Caco-2 (cell line): ENCODE measurements at regions of chr10 and their contacts with region 1.

Region 1: GRCh38 chr10:37754538-37755323 is 102.7 kb downstream of the ZNF248 start:
- DNase-seq: peak; percentile 58 to 63
- H3K4me3 ChIP-seq: no peak overlapping the region
- H3K4me3 Mint-ChIP-seq: no peak overlapping the region
- H3K27ac Mint-ChIP-seq: no peak overlapping the region
- H3K4me1 ChIP-seq: peaks cover 8% of the 10 kb centered on the region; the same call in 1 of the 2 replicates
- H3K4me1 Mint-ChIP-seq: no peaks in the 10 kb centered on the region
- H3K27me3 ChIP-seq: no peaks in the 10 kb centered on the region
- H3K27me3 Mint-ChIP-seq: no peaks in the 10 kb centered on the region
- CTCF ChIP-seq: peak; percentile 58 to 83

Region 2: GRCh38 chr10:36888929-36889573 is 865.7 kb before region 1 on chr10:
- CTCF ChIA-PET with region 1: interaction called, 4 read pairs
- POLR2A ChIA-PET with region 1: no interaction called
- intact Hi-C with region 1: loop called (anchors 1 kb)
- DNase-seq: peak; percentile 84 to 89
- H3K4me3 ChIP-seq: no peak overlapping the region
- H3K4me3 Mint-ChIP-seq: no peak overlapping the region
- H3K27ac Mint-ChIP-seq: no peak overlapping the region
- H3K4me1 ChIP-seq: peaks cover 5% of the 10 kb centered on the region; the same call in 1 of the 2 replicates
- H3K4me1 Mint-ChIP-seq: peaks cover 7% of the 10 kb centered on the region
- H3K27me3 ChIP-seq: no peaks in the 10 kb centered on the region
- H3K27me3 Mint-ChIP-seq: no peaks in the 10 kb centered on the region
- CTCF ChIP-seq: peak; percentile 96

Region 3: GRCh38 chr10:36899651-36900050 is 855.1 kb before region 1 on chr10:
- CTCF ChIA-PET with region 1: no interaction called
- POLR2A ChIA-PET with region 1: no interaction called
- intact Hi-C with region 1: loop called (anchors 5 kb)
- DNase-seq: no peak
- H3K4me3 ChIP-seq: no peak overlapping the region
- H3K4me3 Mint-ChIP-seq: no peak overlapping the region
- H3K27ac Mint-ChIP-seq: no peak overlapping the region
- H3K4me1 ChIP-seq: no peaks in the 10 kb centered on the region
- H3K4me1 Mint-ChIP-seq: no peaks in the 10 kb centered on the region
- H3K27me3 ChIP-seq: no peaks in the 10 kb centered on the region
- H3K27me3 Mint-ChIP-seq: no peaks in the 10 kb centered on the region
- CTCF ChIP-seq: no peak

Region 4: GRCh38 chr10:37146443-37146842 is 608.3 kb before region 1 on chr10:
- CTCF ChIA-PET with region 1: no interaction called
- POLR2A ChIA-PET with region 1: no interaction called
- intact Hi-C with region 1: loop called (anchors 1 kb)
- DNase-seq: peak; percentile 70 to 71
- H3K4me3 ChIP-seq: no peak overlapping the region
- H3K4me3 Mint-ChIP-seq: no peak overlapping the region
- H3K27ac Mint-ChIP-seq: no peak overlapping the region
- H3K4me1 ChIP-seq: peaks cover 10% of the 10 kb centered on the region
- H3K4me1 Mint-ChIP-seq: peaks cover 14% of the 10 kb centered on the region
- H3K27me3 ChIP-seq: no peaks in the 10 kb centered on the region
- H3K27me3 Mint-ChIP-seq: no peaks in the 10 kb centered on the region
- CTCF ChIP-seq: peak; percentile 32 to 43

Region 5: GRCh38 chr10:37434091-37434490 is 320.6 kb before region 1 on chr10:
- CTCF ChIA-PET with region 1: interaction called, 6 read pairs
- POLR2A ChIA-PET with region 1: no interaction called
- intact Hi-C with region 1: loop called (anchors 1 kb)
- DNase-seq: peak in 1 of 2 experiments; percentile 6
- H3K4me3 ChIP-seq: no peak overlapping the region
- H3K4me3 Mint-ChIP-seq: no peak overlapping the region
- H3K27ac Mint-ChIP-seq: no peak overlapping the region
- H3K4me1 ChIP-seq: no peaks in the 10 kb centered on the region
- H3K4me1 Mint-ChIP-seq: no peaks in the 10 kb centered on the region
- H3K27me3 ChIP-seq: no peaks in the 10 kb centered on the region
- H3K27me3 Mint-ChIP-seq: no peaks in the 10 kb centered on the region
- CTCF ChIP-seq: peak; percentile 29 to 50

Region 6: DNA sequence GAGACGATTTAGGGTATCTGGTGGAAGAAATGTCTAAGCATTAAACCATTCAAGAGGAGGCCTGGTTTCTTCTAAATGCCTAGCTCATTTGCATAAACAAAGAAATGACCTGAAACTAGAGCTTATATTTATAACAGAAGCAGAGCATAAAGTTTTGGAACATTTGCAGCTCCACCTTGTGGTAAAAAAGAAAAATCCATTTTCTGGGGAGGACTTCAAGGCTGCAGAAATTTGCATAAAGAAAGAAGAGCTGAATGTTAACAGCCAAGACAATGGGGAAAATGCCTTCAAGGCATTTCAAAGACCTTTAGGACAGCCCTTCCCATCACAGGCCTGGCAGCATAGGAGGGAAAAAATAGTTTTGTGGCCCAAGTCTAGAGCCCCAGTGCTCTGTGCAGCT is 259.3 kb before region 1 on chr10:
- CTCF ChIA-PET with region 1: interaction called, 7 read pairs
- POLR2A ChIA-PET with region 1: no interaction called
- intact Hi-C with region 1: loop called (anchors 10 kb)
- DNase-seq: no peak
- H3K4me3 ChIP-seq: no peak overlapping the region
- H3K4me3 Mint-ChIP-seq: no peak overlapping the region
- H3K27ac Mint-ChIP-seq: no peak overlapping the region
- H3K4me1 ChIP-seq: peaks cover 19% of the 10 kb centered on the region
- H3K4me1 Mint-ChIP-seq: peaks cover 22% of the 10 kb centered on the region
- H3K27me3 ChIP-seq: no peaks in the 10 kb centered on the region
- H3K27me3 Mint-ChIP-seq: no peaks in the 10 kb centered on the region
- CTCF ChIP-seq: peak; percentile 19 to 39

Region 7: DNA sequence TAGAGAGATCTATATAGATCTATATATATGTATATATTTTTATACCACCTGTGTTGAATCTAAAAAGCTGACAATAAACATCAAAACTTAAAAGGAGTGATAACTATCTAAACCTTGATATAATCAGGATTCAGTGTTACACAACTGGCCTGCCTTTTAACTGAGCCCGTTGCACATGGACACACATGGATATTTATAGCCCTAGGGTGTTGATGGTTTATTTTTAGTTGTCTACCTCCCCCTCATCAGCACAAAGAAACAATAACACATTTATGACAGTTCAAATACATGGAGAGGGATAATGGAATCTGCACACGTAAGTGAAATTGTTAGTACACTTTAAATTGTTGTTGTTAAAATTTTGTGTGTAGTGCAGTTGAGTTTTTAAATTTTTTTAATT is 234.2 kb before region 1 on chr10:
- CTCF ChIA-PET with region 1: interaction called, 7 read pairs
- POLR2A ChIA-PET with region 1: no interaction called
- intact Hi-C with region 1: loop called (anchors 1 kb)
- DNase-seq: no peak
- H3K4me3 ChIP-seq: no peak overlapping the region
- H3K4me3 Mint-ChIP-seq: no peak overlapping the region
- H3K27ac Mint-ChIP-seq: no peak overlapping the region
- H3K4me1 ChIP-seq: no peaks in the 10 kb centered on the region
- H3K4me1 Mint-ChIP-seq: no peaks in the 10 kb centered on the region
- H3K27me3 ChIP-seq: no peaks in the 10 kb centered on the region
- H3K27me3 Mint-ChIP-seq: no peaks in the 10 kb centered on the region
- CTCF ChIP-seq: no peak